K562 (cell line): ENCODE measurements at regions of chr4 and their contacts with region 1.

Region 1: GRCh38 chr4:140359562-140360427 is 13.7 kb upstream of the SCOC start:
- DNase-seq: peak; percentile 59 to 88 (median 62)
- ATAC-seq: peak; percentile 100
- H3K4me3 ChIP-seq: no peak overlapping the region
- H3K27ac ChIP-seq: no peak overlapping the region
- H3K4me1 ChIP-seq: no peaks in the 10 kb centered on the region
- H3K27me3 ChIP-seq: no peaks in the 10 kb centered on the region
- CTCF ChIP-seq: peak; percentile 65 to 80 (median 76)
- EP300 ChIP-seq: no peak
- POLR2A ChIP-seq: no peak
- RAD21 ChIP-seq: peak; percentile 74 to 77

Region 2: GRCh38 chr4:140012688-140013486 is 346.9 kb before region 1 on chr4:
- CTCF ChIA-PET with region 1: interaction called, 4 read pairs
- POLR2A ChIA-PET with region 1: no interaction called
- in situ Hi-C with region 1: no loop called
- intact Hi-C with region 1: loop called (anchors 2 kb)
- DNase-seq: peak; percentile 12 to 26 (median 20)
- ATAC-seq: peak; percentile 79
- H3K4me3 ChIP-seq: no peak overlapping the region
- H3K27ac ChIP-seq: no peak overlapping the region
- H3K4me1 ChIP-seq: no peaks in the 10 kb centered on the region
- H3K27me3 ChIP-seq: peaks cover 3% of the 10 kb centered on the region in 2 experiments; a peak in 2 of 5 replicates
- CTCF ChIP-seq: peak; percentile 44 to 62 (median 46); a peak in 4 of 6 replicates
- EP300 ChIP-seq: no peak
- POLR2A ChIP-seq: no peak
- RAD21 ChIP-seq: peak; percentile 42 to 48

Region 3: DNA sequence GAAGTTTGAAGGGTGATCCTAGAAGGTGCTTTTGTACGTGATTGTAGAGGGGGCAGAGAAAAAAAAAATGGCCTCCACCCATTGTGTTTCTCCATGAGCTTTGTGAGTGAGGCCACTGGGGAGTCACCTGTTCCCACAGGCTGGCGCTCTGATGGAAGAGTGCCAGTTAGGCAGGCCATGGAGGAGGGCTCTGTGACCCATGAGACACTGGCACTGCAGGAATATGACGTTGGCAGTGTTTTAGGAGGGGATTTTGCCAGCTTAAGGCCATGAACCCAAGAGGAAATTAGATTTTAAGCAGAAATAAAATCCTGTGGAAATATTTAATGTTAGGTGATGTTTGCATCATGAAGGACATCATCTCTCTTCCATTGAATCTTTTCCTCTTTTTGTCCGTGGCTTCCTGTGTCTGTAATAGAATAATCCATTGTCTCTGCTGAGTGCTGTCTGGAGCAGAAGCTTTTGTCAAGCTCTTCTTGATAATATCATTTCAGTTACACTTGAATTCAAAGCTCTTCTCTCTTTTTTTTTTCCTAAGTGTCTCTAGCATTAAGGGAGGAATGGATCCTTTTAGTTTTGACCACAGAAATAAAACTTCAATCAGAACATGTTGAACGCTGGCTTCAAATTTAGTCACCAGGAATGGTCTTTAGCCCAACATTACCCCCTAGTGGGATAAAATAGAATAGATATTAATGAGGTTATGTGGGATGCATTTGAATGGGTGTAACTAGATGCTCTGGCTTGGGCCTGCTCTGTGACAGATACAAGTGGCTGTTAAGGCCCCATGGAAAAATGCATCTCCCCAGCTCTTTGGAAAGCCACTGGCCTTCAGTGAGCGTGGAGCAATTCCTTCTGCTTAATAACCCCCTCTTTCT is 250.0 kb after region 1 on chr4:
- CTCF ChIA-PET with region 1: interaction called, 51 read pairs
- POLR2A ChIA-PET with region 1: no interaction called
- in situ Hi-C with region 1: loop called (anchors 5 kb)
- intact Hi-C with region 1: loop called (anchors 1 kb)
- DNase-seq: peak; percentile 22 to 54 (median 38)
- ATAC-seq: peak; percentile 86
- H3K4me3 ChIP-seq: no peak overlapping the region
- H3K27ac ChIP-seq: no peak overlapping the region
- H3K4me1 ChIP-seq: no peaks in the 10 kb centered on the region
- H3K27me3 ChIP-seq: peaks cover 3 to 4% of the 10 kb centered on the region in 2 experiments; a peak in 3 of 5 replicates
- CTCF ChIP-seq: peak; percentile 46 to 71 (median 54); a peak in 5 of 6 replicates
- EP300 ChIP-seq: no peak
- POLR2A ChIP-seq: no peak
- RAD21 ChIP-seq: peak; percentile 67 to 78

Region 4: DNA sequence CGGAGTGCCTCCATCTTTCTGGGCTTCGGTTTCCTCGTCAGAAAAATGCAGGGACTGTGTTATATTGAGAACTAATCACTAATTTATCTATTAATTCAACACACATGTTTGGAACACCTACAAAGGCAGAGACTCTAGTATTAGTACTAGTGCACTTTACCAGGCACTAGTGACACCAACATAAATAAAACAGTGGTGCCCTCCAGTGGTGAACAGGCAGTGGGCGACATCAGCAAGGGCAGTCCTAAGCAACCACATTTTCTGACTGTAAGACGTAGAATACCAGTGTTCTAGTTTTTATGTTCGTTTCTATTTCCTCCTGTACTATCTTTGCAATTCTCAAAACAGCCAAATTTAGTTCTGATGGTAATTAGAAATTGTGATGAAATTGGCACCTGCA is 278.0 kb after region 1 on chr4:
- CTCF ChIA-PET with region 1: interaction called, 18 read pairs
- POLR2A ChIA-PET with region 1: no interaction called
- in situ Hi-C with region 1: no loop called
- intact Hi-C with region 1: loop called (anchors 1 kb)
- DNase-seq: peak; percentile 24 to 60 (median 44)
- ATAC-seq: peak; percentile 92
- H3K4me3 ChIP-seq: no peak overlapping the region
- H3K27ac ChIP-seq: no peak overlapping the region
- H3K4me1 ChIP-seq: peaks cover 0 to 6% of the 10 kb centered on the region in 2 experiments; a peak in 2 of 5 replicates
- H3K27me3 ChIP-seq: peaks cover 14 to 18% of the 10 kb centered on the region in 2 experiments; a peak in 4 of 5 replicates
- CTCF ChIP-seq: peak; percentile 62 to 69 (median 66)
- EP300 ChIP-seq: no peak
- POLR2A ChIP-seq: no peak
- RAD21 ChIP-seq: peak; percentile 41 to 65

Region 5: DNA sequence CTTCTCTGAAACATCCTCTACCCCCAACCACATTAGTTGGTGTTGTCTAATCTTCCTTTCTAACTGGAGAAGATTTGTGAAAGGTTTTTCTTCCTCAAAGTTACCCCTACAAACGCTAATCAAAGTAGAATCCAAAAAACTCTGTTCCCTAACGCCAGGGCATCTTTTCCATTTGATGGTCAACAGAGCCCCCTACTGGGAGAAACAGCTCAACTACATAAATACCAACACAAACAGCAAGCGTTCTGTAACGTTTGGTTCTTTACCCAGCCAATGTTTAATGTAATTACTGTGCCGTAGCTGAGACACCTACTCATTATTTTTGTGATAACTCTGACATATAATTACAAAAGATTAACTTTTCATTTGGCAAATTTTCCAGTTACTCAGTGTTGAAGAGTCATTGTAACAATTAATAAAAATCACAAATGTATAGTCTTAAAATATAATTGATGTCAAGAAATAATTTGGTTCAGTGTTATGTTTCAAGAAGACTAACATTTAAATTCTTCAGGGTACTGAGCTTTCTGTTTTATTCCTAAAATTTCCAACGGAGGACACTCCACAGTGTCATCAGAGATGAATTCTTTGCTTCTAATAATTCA is 491.3 kb after region 1 on chr4:
- CTCF ChIA-PET with region 1: interaction called, 13 read pairs
- POLR2A ChIA-PET with region 1: interaction called, 3 read pairs
- in situ Hi-C with region 1: loop called (anchors 25 kb)
- intact Hi-C with region 1: loop called (anchors 2 kb)
- DNase-seq: peak; percentile 53 to 67 (median 60)
- ATAC-seq: peak; percentile 78
- H3K4me3 ChIP-seq: no peak overlapping the region
- H3K27ac ChIP-seq: no peak overlapping the region
- H3K4me1 ChIP-seq: no peaks in the 10 kb centered on the region
- H3K27me3 ChIP-seq: no peaks in the 10 kb centered on the region
- CTCF ChIP-seq: peak; percentile 63 to 80 (median 71); a peak in 5 of 6 replicates
- EP300 ChIP-seq: no peak
- POLR2A ChIP-seq: no peak
- RAD21 ChIP-seq: peak; percentile 71

Region 6: GRCh38 chr4:140861359-140862176 is 501.8 kb after region 1 on chr4:
- CTCF ChIA-PET with region 1: no interaction called
- POLR2A ChIA-PET with region 1: no interaction called
- in situ Hi-C with region 1: loop called (anchors 25 kb)
- intact Hi-C with region 1: no loop called
- DNase-seq: peak; percentile 35 to 70 (median 40)
- ATAC-seq: peak; percentile 81
- H3K4me3 ChIP-seq: no peak overlapping the region
- H3K27ac ChIP-seq: no peak overlapping the region
- H3K4me1 ChIP-seq: no peaks in the 10 kb centered on the region; a peak in 1 of 5 replicates
- H3K27me3 ChIP-seq: peaks cover 0 to 3% of the 10 kb centered on the region in 2 experiments; a peak in 2 of 5 replicates
- CTCF ChIP-seq: peak; percentile 51 to 79 (median 61)
- EP300 ChIP-seq: no peak
- POLR2A ChIP-seq: no peak
- RAD21 ChIP-seq: peak; percentile 76 to 85